Calu3 (cell line): ENCODE measurements at regions of chr9 and their contacts with region 1.

Region 1: DNA sequence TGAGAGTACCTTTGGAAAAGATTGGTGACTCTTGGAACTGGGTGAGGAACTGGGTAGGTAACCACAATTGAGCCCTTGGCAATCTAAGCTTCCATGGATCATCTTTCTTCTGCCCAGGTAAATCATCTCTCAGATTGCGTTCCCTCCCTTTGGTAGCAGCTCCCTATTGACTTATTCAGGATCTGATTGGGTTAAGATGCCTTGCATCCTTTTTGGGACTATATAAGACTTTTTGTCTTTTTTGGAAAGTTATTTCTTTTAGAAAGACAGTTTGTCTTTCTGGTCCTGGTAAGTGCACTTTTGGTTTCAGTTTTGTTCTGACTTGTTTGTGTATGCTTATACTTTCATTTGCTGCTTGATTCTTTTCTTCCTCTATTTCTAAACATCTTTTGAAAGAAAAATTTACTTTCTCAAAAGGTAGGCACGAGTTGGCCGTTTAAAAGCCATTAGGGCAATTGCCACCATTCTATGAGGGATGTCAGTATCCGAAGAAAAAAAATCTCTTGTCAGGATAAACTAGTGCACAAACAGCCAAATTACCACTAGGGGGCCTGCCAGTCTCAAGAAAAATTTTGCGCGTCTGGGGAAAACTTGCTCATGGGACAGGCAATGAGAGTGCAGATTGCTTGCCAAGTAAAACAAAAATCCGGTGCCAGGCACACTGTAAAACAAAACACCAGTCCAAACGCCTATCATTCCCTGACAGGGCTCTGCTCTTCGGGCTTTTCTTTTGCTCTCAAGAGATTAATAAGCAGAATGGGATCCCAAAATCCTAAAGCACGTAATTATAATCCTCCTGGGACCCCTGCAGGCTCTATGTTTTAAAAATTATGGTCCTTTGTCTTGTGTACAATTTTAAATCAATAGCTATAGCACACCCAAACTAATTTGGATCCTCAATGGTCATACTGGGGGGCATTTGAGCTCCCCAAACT is 12.8 kb downstream of the OR1J1 start:
- DNase-seq: peak; percentile 70
- H3K4me3 Mint-ChIP-seq: peak overlapping the region; percentile 49
- H3K27ac Mint-ChIP-seq: no peak overlapping the region
- H3K4me1 Mint-ChIP-seq: no peaks in the 10 kb centered on the region
- H3K27me3 Mint-ChIP-seq: peaks cover 72% of the 10 kb centered on the region
- CTCF ChIP-seq: peak; percentile 19

Region 2: GRCh38 chr9:122518226-122518625 is 53.3 kb after region 1 on chr9:
- CTCF ChIA-PET with region 1: no interaction called
- intact Hi-C with region 1: loop called (anchors 5 kb)
- DNase-seq: no peak
- H3K4me3 Mint-ChIP-seq: no peak overlapping the region
- H3K27ac Mint-ChIP-seq: no peak overlapping the region
- H3K4me1 Mint-ChIP-seq: no peaks in the 10 kb centered on the region
- H3K27me3 Mint-ChIP-seq: peaks cover 24% of the 10 kb centered on the region
- CTCF ChIP-seq: no peak

Region 3: GRCh38 chr9:122810306-122810946 is 345.5 kb after region 1 on chr9:
- CTCF ChIA-PET with region 1: interaction called, 3 read pairs
- intact Hi-C with region 1: loop called (anchors 1 kb)
- DNase-seq: peak; percentile 59
- H3K4me3 Mint-ChIP-seq: no peak overlapping the region
- H3K27ac Mint-ChIP-seq: no peak overlapping the region
- H3K4me1 Mint-ChIP-seq: no peaks in the 10 kb centered on the region
- H3K27me3 Mint-ChIP-seq: peaks cover 7% of the 10 kb centered on the region
- CTCF ChIP-seq: peak; percentile 63

Region 4: DNA sequence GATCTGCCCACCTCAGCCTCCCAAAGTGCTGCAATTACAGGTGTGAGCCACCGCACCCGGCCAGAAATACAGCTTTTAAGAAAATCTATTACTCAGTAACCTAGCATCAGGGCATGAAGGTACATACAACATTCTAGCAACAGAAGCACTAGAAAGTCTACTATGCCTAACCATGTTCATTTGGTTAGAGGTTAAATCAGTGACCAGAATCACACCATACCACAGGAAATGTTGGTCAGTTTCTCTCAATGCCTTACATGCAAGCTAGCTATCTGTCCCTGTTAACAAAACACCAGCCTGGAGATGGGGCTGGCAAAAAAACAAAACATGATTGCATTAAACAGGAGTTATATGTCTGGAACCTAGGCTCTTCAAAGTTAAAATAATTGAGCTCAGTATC is 699.4 kb after region 1 on chr9:
- CTCF ChIA-PET with region 1: no interaction called
- intact Hi-C with region 1: no loop called
- DNase-seq: no peak
- H3K4me3 Mint-ChIP-seq: no peak overlapping the region
- H3K27ac Mint-ChIP-seq: no peak overlapping the region
- H3K4me1 Mint-ChIP-seq: no peaks in the 10 kb centered on the region
- H3K27me3 Mint-ChIP-seq: no peaks in the 10 kb centered on the region
- CTCF ChIP-seq: no peak

Region 5: DNA sequence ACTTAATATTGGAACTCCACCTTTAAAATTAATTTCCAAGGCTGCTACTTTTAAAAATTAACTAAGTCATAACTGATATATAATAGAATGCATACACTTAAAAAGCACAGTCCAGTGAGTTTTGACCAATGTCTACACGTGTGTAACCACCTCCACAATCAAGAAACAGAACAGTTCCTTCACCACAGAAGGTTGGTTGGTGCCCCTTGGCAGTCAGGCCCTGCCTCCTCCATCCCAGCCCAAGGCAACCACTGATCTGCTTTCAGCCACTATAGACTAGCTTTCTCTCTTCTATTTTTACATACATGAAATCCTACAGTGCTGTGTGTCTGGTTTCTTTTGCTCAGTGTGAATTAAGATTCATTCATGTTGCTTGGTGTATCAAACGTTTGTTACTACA is 1106.3 kb after region 1 on chr9:
- CTCF ChIA-PET with region 1: no interaction called
- intact Hi-C with region 1: no loop called
- DNase-seq: no peak
- H3K4me3 Mint-ChIP-seq: no peak overlapping the region
- H3K27ac Mint-ChIP-seq: no peak overlapping the region
- H3K4me1 Mint-ChIP-seq: no peaks in the 10 kb centered on the region
- H3K27me3 Mint-ChIP-seq: no peaks in the 10 kb centered on the region
- CTCF ChIP-seq: no peak